A549 (cell line): ENCODE measurements at regions of chr19 and their contacts with region 1.

Region 1: DNA sequence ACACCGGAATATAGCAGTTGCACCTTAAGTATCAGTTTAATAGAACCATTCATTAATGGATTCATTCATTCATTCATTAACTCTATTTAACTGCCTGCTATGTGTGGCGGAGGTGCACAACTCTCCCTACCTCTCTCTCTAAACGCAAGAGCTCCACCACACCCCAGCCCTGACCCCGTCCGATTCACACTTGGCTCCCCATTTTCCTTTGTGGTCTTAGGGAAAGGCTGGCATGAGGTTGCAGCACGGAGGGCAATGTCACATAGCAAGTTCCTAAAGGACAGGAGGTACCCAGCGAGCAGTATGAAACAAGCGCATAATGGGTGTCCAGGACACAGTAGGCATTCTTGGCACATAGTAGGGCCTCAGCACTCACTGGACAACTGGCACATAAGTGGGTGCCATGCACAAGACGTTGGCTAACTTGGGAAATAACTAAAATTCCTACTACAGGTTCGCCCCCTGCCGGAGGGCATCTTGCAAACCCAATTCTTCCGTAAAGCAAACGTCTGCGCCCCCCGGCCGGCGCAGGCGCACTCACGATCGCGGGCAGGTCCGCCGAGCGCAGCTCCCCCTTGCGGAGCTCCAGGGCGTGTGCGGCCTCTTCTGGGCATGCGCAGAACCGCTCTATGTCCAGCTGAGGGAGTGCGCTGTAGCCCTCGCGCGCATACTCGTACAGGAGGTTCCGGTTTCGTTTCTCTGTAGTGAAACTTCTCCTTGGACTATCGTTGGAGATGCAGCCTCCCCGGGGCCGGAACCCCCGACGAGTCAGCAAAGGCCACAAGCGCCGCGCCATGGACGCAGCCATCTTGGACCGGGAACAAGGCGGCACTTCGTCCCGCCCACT is at the start of gene SARS2:
- DNase-seq: peak; percentile 98 to 99
- ATAC-seq: peak; percentile 65 to 69
- H3K4me3 ChIP-seq: peak within 1 kb of the TSS; percentile 66
- H3K27ac ChIP-seq: peak within 1 kb of the TSS; percentile 87
- H3K4me1 ChIP-seq: peaks cover 19% of the 10 kb centered on the region
- CTCF ChIP-seq: peak; percentile 100
- EP300 ChIP-seq: no peak
- POLR2A ChIP-seq: no peak
- RAD21 ChIP-seq: peak; percentile 88 to 98
- polyA plus RNA-seq, gene SARS2: 46.1 and 46.7 TPM in 2 replicates

Region 2: DNA sequence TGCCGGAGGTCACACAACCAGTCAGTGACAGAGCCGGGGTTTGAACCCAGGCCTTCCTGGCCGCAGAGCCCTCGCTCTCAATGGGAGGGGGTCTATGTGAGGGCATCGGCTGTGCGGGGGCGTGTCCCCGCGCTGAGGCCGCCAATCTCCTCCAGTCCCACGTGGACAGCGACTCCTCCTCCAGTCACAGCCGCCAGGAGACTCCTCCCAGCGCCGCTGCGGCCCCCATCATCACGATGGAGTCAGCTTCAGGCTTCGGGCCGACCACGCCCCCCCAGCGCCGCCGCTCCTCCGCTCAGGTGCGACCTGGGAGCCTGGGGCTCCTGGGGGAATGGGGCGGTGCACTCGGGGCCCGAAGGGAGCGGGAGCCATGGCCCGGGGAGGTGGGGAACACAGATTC is 535.7 kb before region 1 on chr19:
- CTCF ChIA-PET with region 1: interaction called, 147 read pairs
- POLR2A ChIA-PET with region 1: no interaction called
- DNase-seq: no peak
- ATAC-seq: no peak
- H3K4me3 ChIP-seq: no peak overlapping the region
- H3K27ac ChIP-seq: no peak overlapping the region
- H3K4me1 ChIP-seq: peaks cover 28% of the 10 kb centered on the region
- CTCF ChIP-seq: no peak
- EP300 ChIP-seq: no peak
- POLR2A ChIP-seq: no peak
- RAD21 ChIP-seq: no peak

Region 3: DNA sequence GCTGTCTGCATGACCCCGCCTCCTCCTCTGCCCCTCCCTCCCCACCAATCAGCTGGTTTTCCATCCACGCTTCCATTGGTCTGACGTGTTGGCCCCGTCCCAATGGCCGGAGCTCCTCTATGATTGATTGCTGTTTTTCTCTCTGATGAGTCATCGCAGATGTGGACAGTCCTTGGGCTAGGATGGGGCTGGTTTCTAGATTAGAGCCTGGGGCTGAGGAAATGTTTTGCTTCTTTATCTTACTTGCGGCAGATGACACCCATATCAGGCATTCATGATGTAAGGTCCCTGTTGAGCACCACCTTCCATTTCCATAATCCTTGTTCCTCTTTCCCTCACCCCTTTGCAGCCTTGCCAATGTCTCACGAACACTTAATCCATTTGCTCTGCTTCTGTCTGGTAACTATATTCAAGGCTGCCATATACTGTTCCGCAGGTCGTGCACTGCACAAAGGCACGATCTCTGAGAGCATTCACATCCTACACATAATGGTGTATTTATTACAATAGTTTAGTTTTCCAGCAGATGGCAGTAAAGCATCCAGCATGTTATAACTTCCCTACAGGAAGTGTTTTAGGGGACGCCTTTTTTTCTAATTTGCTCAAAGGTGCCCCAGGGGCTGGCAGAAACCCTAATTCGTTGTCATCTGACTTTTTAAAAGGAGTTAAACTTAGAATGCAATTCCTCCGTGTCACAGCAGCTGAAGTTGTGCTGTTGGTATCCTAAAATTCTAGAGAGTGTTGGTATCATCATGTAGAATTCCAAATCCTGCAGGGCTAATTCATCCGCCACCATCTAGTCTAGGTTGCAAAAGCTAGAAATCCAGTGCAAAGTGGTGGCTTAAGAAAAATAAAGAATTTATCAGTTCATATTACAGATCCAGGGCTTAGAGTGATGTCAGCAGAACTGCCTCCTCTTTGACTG is 385.9 kb before region 1 on chr19:
- CTCF ChIA-PET with region 1: interaction called, 78 read pairs
- POLR2A ChIA-PET with region 1: interaction called, 22 read pairs
- DNase-seq: peak; percentile 96 to 98
- ATAC-seq: peak; percentile 89 to 93
- H3K4me3 ChIP-seq: peak overlapping the region; percentile 37
- H3K27ac ChIP-seq: peak overlapping the region; percentile 59 to 69
- H3K4me1 ChIP-seq: peaks cover 14% of the 10 kb centered on the region
- CTCF ChIP-seq: peak; percentile 100
- EP300 ChIP-seq: no peak
- POLR2A ChIP-seq: no peak
- RAD21 ChIP-seq: peak; percentile 99

Region 4: GRCh38 chr19:38759590-38760003 is 170.6 kb before region 1 on chr19:
- CTCF ChIA-PET with region 1: interaction called, 15 read pairs
- POLR2A ChIA-PET with region 1: interaction called, 3 read pairs
- DNase-seq: no peak
- ATAC-seq: peak in 1 of 2 experiments; percentile 24; a peak in 1 of 6 replicates
- H3K4me3 ChIP-seq: no peak overlapping the region
- H3K27ac ChIP-seq: 0 out of 6 replicates have a peak overlapping the region, but pooled peaks of 1 of the 2 experiments have one; percentile 4
- H3K4me1 ChIP-seq: peaks cover 16% of the 10 kb centered on the region
- CTCF ChIP-seq: no peak
- EP300 ChIP-seq: no peak
- POLR2A ChIP-seq: no peak
- RAD21 ChIP-seq: no peak

Region 5: GRCh38 chr19:38869856-38870607 is 60.1 kb before region 1 on chr19:
- CTCF ChIA-PET with region 1: interaction called, 45 read pairs
- POLR2A ChIA-PET with region 1: no interaction called
- DNase-seq: peak; percentile 89 to 93
- ATAC-seq: peak; percentile 90 to 94
- H3K4me3 ChIP-seq: peak overlapping the region; percentile 31
- H3K27ac ChIP-seq: peak overlapping the region; percentile 56 to 80
- H3K4me1 ChIP-seq: peaks cover 18% of the 10 kb centered on the region
- CTCF ChIP-seq: peak; percentile 99
- EP300 ChIP-seq: no peak
- POLR2A ChIP-seq: no peak; the same call in 1 of the 2 replicates
- RAD21 ChIP-seq: peak; percentile 73 to 88

Region 6: GRCh38 chr19:38904581-38905539 is 25.3 kb before region 1 on chr19:
- CTCF ChIA-PET with region 1: interaction called, 59 read pairs
- POLR2A ChIA-PET with region 1: interaction called, 30 read pairs
- DNase-seq: no peak
- ATAC-seq: peak in 1 of 2 experiments; percentile 4; a peak in 1 of 6 replicates
- H3K4me3 ChIP-seq: no peak overlapping the region
- H3K27ac ChIP-seq: 0 out of 6 replicates have a peak overlapping the region, but pooled peaks of 1 of the 2 experiments have one; percentile 8
- H3K4me1 ChIP-seq: peaks cover 16% of the 10 kb centered on the region
- CTCF ChIP-seq: no peak
- EP300 ChIP-seq: no peak
- POLR2A ChIP-seq: no peak
- RAD21 ChIP-seq: no peak

Region 7: GRCh38 chr19:38975214-38975860 is 45.2 kb after region 1 on chr19 and contains the start of gene FBXO17:
- CTCF ChIA-PET with region 1: interaction called, 50 read pairs
- POLR2A ChIA-PET with region 1: interaction called, 21 read pairs
- DNase-seq: peak; percentile 84 to 87
- ATAC-seq: peak; percentile 83
- H3K4me3 ChIP-seq: peak within 1 kb of the TSS; percentile 51
- H3K27ac ChIP-seq: peak within 1 kb of the TSS; percentile 91 to 94
- H3K4me1 ChIP-seq: peaks cover 51% of the 10 kb centered on the region
- CTCF ChIP-seq: no peak; the same call in 2 of the 3 replicates
- EP300 ChIP-seq: 0 out of 5 replicates have a peak, but pooled peaks of 1 of the 2 experiments have one; percentile 6
- POLR2A ChIP-seq: peak; percentile 41
- RAD21 ChIP-seq: 0 out of 5 replicates have a peak, but pooled peaks have one; percentile 11 to 16
- polyA plus RNA-seq, gene FBXO17: 68.1 and 73.1 TPM in 2 replicates

Region 8: DNA sequence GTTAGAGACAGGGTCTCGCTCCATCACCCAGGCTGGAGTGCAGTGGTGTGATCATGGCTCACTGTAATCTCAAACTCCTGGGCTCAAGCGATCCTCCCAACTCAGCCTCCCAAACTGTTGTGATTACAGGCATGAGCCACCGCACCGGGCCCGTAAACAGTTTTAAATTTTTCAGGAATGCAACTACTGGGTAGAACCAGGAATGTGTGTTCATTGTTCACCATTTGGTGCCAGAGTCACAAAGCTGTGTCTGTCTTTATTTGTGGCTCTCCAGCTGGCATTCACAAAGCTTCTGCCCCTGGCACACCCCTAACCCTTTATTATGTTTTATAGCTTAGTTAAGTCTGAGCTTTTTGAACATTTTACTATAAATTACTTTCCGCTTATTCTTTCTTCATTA is 134.3 kb after region 1 on chr19:
- CTCF ChIA-PET with region 1: no interaction called
- POLR2A ChIA-PET with region 1: no interaction called
- DNase-seq: no peak
- ATAC-seq: no peak; a peak in 2 of 6 replicates
- H3K4me3 ChIP-seq: no peak overlapping the region
- H3K27ac ChIP-seq: peak overlapping the region; percentile 9 to 26; a peak in 3 of 6 replicates
- H3K4me1 ChIP-seq: peaks cover 10% of the 10 kb centered on the region
- CTCF ChIP-seq: no peak
- EP300 ChIP-seq: no peak
- POLR2A ChIP-seq: no peak
- RAD21 ChIP-seq: no peak